ENCODE measurements at regions of chr7 and their contacts with region 1.

Region 1: GRCh38 chr7:5494683-5495561 is 71.3 kb upstream of the TNRC18 start:
- DNase-seq: peak; percentile 78 to 82 (median 80)
- ATAC-seq: peak; percentile 86
- H3K4me3 ChIP-seq: no peak overlapping the region
- H3K27ac ChIP-seq: peak overlapping the region; percentile 71 to 83 (median 74)
- H3K4me1 ChIP-seq: peaks cover 21% of the 10 kb centered on the region
- H3K27me3 ChIP-seq: no peaks in the 10 kb centered on the region
- CTCF ChIP-seq: peak; percentile 82 to 97 (median 93)
- POLR2A ChIP-seq: no peak

Region 2: DNA sequence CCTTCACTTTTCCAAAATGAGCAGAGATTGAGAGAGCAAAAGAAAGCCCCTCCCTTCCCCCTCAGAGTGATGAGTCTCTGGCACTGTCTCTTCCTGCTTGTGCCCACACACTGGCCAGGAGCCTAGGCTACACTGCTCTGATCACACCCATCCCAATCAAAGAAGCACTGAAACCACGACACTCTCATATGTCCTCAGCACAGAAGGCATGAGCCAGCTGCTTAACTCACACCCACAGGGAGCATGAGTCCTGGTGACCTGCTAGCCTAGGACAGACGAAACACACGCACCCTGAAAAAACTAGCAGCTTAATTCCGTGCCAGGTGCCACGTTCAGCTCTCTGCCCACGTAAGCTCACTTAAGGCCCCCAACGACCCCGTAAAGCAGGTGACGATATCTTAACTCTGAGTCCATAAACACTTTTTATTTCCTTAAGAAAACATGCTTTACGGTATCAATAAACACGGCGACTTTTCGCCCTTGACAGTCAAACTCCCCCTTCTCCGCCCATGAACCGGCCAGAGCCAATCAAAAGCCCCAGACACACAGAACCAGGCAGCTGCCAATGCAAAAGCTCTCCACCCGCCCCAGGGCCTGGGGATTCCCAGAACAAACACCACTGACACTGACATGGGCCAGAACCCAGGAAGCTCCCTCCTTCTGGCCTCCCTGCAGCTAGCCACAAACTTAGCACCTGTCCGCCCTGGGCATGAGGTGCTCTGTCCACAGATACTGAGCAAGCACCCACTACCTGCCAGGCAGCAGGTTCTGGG is 140.3 kb before region 1 on chr7:
- intact Hi-C with region 1: no loop called
- DNase-seq: peak; percentile 59 to 84 (median 71)
- ATAC-seq: peak; percentile 87
- H3K4me3 ChIP-seq: no peak overlapping the region
- H3K27ac ChIP-seq: peak overlapping the region in 3 of 4 donors; percentile 48 to 78 (median 68)
- H3K4me1 ChIP-seq: peaks cover 16% of the 10 kb centered on the region
- H3K27me3 ChIP-seq: no peaks in the 10 kb centered on the region
- CTCF ChIP-seq: no peak
- POLR2A ChIP-seq: no peak

Region 3: DNA sequence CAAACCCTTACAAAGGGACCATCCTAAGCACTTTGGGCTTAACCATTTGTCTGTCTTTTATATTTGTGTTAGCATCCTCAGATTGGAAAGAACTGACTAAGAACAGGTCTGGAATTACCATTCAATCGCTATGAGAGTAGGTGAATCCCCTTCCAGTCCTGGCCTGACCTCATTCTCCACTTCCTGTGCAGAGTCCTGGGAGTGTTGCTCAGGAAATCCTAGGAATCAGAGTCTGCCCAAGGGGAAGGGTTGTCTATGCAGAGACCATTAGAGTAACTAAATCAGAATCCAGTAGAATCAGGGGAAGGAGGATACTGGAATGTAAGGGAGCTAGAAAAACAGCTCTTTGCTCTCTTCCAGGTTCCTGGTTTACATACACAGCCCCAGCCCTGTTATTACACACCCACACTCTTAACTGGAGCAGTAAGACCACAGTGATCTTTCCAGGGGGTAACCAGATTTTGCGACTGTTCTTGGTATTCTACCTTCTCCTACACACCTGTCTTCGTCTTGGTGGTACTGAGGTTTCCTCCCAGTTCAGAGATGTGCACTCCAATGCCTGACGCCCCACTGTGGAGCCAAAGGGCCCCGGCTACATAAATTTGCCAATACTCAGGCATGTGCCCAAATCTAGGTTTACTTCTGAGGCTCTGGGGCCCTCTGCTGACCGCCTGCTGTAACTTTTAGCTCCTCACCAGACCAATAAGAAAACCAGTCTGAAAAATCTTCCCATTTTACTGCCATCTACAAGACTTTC is 182.8 kb after region 1 on chr7:
- intact Hi-C with region 1: loop called (anchors 10 kb)
- DNase-seq: peak; percentile 37 to 65 (median 50)
- ATAC-seq: peak; percentile 64
- H3K4me3 ChIP-seq: no peak overlapping the region
- H3K27ac ChIP-seq: peak overlapping the region in 1 of 4 donors; percentile 12
- H3K4me1 ChIP-seq: no peaks in the 10 kb centered on the region
- H3K27me3 ChIP-seq: no peaks in the 10 kb centered on the region
- CTCF ChIP-seq: peak; percentile 6 to 53 (median 41)
- POLR2A ChIP-seq: no peak

Region 4: GRCh38 chr7:5704534-5704922 is 209.6 kb after region 1 on chr7:
- intact Hi-C with region 1: loop called (anchors 10 kb)
- DNase-seq: peak; percentile 82 to 88 (median 85)
- ATAC-seq: peak; percentile 89
- H3K4me3 ChIP-seq: no peak overlapping the region
- H3K27ac ChIP-seq: peak overlapping the region in 2 of 4 donors; percentile 0 to 63
- H3K4me1 ChIP-seq: peaks cover 30% of the 10 kb centered on the region
- H3K27me3 ChIP-seq: no peaks in the 10 kb centered on the region
- CTCF ChIP-seq: peak; percentile 79 to 98 (median 95)
- POLR2A ChIP-seq: no peak

Measured in body of pancreas (tissue), 4 donors.